ENCODE measurements at regions of chr12 and their contacts with region 1.

Region 1: DNA sequence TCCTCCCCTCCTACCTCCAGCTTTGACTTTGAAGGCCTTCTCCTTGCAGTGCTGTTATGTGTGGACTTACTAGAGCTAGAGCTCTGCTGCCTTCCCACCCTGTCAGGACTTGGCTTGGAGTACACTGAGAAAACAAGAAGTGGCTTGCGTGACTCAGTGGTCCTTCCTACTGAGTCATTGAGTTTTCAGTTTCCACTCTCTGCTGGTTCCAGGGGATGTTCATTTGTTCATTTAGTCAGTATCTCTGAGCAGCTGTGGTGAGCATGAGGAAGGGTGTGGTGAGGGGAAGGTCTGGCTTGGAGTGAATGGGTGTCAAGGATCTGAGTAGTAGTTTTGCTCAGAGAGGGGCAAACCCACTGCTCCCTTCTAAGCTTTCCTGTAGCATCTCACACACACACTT is 17.2 kb upstream of the ELK3 start:
- DNase-seq: peak; percentile 87
- H3K4me3 Mint-ChIP-seq: peak overlapping the region; percentile 36
- H3K27ac Mint-ChIP-seq: peak overlapping the region; percentile 90
- H3K4me1 Mint-ChIP-seq: peaks cover 12% of the 10 kb centered on the region
- H3K27me3 Mint-ChIP-seq: no peaks in the 10 kb centered on the region

Region 2: GRCh38 chr12:96047229-96048211 is 129.5 kb before region 1 on chr12:
- intact Hi-C with region 1: loop called (anchors 1 kb)
- DNase-seq: peak; percentile 73
- H3K4me3 Mint-ChIP-seq: peak overlapping the region; percentile 53
- H3K27ac Mint-ChIP-seq: peak overlapping the region; percentile 81
- H3K4me1 Mint-ChIP-seq: peaks cover 38% of the 10 kb centered on the region
- H3K27me3 Mint-ChIP-seq: no peaks in the 10 kb centered on the region

Region 3: GRCh38 chr12:96132819-96133218 is 44.2 kb before region 1 on chr12:
- intact Hi-C with region 1: loop called (anchors 5 kb)
- DNase-seq: peak; percentile 69
- H3K4me3 Mint-ChIP-seq: no peak overlapping the region
- H3K27ac Mint-ChIP-seq: no peak overlapping the region
- H3K4me1 Mint-ChIP-seq: peaks cover 10% of the 10 kb centered on the region
- H3K27me3 Mint-ChIP-seq: peaks cover 14% of the 10 kb centered on the region

Region 4: DNA sequence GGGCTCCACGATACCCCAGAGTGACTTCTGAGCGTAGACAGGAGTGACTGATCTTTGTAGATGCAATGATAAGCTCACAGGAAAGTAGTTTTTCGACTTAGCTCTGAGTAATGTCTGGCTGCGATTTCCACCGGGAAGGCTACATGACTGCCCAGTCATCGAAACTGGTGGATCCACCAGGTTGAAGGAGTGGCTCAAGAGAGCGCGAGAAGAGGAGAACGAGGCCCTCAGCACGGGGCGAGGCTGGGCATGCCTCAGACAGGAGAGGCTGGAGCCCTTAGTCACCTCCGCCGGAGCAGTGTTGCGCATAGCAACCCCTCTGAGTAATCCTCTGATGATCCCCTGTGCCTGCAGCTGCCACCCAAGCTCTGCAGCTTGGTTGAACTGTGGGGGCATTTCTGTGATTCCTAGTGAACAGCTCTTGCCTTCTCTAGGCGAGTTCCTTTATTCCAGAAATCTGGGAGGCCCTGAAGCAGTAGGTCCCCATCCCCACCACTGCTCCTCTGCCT is 42.7 kb after region 1 on chr12:
- intact Hi-C with region 1: loop called (anchors 1 kb)
- DNase-seq: no peak
- H3K4me3 Mint-ChIP-seq: no peak overlapping the region
- H3K27ac Mint-ChIP-seq: no peak overlapping the region
- H3K4me1 Mint-ChIP-seq: peaks cover 27% of the 10 kb centered on the region
- H3K27me3 Mint-ChIP-seq: no peaks in the 10 kb centered on the region

Region 5: GRCh38 chr12:96359328-96359727 is 182.3 kb after region 1 on chr12:
- intact Hi-C with region 1: no loop called
- DNase-seq: no peak
- H3K4me3 Mint-ChIP-seq: no peak overlapping the region
- H3K27ac Mint-ChIP-seq: no peak overlapping the region
- H3K4me1 Mint-ChIP-seq: peaks cover 27% of the 10 kb centered on the region
- H3K27me3 Mint-ChIP-seq: no peaks in the 10 kb centered on the region

Region 6: DNA sequence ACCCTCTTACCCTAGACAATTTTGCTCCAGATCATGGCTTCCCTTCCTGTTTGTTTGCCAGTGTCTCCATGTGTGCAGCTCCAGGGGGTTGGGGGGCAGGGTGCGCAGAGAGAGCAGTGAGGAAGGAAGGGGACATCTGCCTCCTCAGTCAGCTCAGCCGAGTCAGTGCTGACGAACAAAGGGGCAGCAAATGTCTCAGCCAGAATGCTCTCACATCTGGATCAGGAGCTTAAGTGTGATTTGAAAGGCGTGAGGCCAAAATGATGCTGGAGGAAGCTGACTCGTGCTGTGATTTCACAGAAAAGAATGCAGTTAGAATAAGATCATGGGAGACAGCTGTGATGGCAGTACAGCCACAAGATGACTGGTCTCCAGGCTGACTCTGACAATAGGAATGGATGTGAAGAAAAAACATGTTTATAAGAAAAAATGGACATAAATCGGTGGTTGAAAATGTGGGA is 250.3 kb after region 1 on chr12:
- intact Hi-C with region 1: loop called (anchors 5 kb)
- DNase-seq: peak; percentile 68
- H3K4me3 Mint-ChIP-seq: peak overlapping the region; percentile 63
- H3K27ac Mint-ChIP-seq: peak overlapping the region; percentile 80
- H3K4me1 Mint-ChIP-seq: peaks cover 37% of the 10 kb centered on the region
- H3K27me3 Mint-ChIP-seq: no peaks in the 10 kb centered on the region

Measured in activated CD4-positive, alpha-beta T cell treated with anti-CD3 and anti-CD28 coated beads, Interleukin-2, amount 10 ng/mL, durations not matched to agents 24 days and 14 days (primary cell).